ENCODE measurements at regions of chr22 and their contacts with region 1.

Region 1: DNA sequence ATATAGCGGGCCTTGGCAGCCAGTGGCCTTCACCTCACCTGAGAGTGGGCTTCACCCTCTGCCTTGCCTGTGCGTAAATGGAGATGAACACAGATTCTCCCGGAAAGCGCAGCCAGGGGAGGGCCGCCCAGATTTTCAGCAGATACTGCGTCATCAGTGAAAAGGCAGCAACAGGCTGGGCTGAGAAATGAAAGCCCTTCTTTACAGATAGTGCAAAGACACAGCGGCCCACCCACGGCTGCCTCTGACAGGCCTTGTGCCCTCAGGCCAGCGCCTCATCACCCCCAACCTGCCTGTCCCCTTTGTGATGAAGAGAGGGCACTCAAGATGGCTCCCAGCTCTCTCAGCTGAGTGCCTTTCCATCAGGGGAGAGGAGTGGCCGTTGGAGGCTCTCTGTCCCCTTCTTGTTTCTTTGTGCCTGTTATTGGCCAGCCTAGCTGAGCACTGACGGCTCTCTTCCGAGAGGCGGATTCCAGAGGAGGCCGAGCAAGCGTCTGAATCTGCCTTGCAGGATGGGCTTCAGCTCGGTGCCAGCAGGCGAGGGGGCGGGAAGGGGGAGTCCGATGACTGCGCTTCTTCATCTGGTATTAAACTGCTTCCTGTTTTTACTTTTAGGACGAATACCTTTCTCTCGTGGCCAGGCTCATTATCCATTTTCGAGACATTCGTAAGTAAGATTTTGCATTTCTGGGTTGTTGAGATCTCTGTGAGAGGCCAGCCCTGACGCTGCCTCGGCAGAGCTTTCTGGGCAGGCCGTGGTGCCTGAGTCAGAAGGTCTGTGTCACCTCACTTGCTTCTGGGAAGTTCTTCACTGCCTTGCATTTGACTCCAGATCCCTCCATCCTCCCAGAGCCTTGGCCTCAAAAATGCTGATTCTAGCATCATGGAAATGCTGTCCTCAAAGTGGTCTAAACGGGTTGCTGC is 43.7 kb downstream of the MED15 start:
- DNase-seq: peak; percentile 71

Region 2: DNA sequence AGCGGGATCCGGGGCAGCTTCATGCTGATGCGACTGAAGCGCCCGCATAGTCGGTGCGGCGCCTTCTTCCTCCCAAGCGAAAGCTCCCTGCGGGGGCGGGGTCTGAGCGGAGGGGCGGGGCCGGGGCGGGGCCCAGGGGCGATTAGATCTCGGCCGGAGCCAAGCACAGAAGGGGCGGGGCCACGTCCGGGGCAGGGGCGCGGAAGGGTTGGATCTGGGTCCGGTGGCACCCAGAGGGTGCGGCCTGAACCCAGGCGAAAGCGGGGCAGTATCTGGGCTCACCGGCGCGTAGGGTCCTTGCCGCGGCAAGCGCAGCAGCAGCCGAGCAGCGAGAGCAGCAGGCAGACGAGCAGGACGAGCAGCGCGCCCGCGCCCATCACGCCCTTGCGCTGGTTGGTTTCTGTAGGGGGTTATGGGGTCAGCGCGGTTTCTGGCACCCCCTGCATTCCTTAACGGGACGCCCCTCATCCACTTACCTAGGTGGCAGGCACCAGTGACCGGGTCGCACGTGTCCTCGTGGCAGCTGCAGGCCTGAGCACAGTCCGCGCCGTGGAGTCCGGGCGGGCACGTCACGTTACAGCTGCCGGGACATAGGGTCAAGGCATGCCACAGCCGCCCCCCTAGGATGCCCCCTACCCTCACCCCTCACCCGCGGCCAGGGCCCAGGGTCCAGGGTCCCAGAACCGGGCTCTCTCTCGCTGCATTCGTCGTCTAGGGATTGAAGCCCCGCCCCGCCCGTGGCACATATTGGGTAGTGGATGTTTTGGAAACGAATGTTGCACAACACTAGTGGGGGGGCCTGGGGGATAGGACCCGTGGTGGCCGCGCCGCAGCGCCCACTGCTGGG is 121.6 kb before region 1 on chr22:
- intact Hi-C with region 1: loop called (anchors 10 kb)
- DNase-seq: peak; percentile 88

Region 3: GRCh38 chr22:20495861-20496681 is 55.0 kb before region 1 on chr22:
- intact Hi-C with region 1: no loop called
- DNase-seq: peak; percentile 97

Region 4: DNA sequence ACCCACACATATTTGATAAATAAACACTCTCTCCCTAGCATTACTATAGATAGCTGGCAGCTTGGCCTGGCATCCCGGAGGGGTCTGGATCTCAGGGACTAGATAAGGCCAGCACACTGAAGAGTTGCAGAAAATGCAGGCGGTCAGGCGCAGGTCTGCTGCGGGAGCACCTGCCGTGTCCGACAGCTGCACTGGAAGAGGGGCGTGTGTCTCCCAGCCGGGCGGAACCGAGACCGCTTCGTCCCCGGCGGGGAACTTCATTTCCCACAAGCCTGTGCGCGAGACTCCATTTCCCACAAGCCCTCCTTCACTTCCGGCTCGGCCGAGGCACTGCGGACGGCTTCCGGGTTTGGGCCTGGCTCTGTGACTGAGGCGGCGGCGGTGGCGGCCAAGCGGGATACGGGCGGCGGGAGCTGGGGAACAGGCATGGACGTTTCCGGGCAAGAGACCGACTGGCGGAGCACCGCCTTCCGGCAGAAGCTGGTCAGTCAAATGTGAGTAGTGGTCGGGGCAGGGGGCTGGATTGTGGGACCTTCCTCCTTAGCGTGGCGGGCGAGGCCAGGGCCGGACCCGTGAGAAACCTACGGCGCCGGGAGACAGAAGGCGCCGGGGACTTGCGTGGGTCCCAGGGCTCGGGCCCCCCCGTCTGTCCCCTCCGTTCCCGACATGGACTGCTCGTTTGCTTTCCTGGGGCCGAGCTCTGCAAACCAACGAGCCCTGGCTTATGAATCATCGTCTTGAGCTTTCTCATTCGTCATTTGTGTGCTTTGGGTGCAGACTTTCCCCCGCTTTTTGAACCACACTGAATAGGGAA is 43.6 kb before region 1 on chr22 and contains the start of gene MED15:
- intact Hi-C with region 1: loop called (anchors 5 kb)
- DNase-seq: peak; percentile 97
- total RNA-seq, gene MED15: 43.9 TPM

Region 5: DNA sequence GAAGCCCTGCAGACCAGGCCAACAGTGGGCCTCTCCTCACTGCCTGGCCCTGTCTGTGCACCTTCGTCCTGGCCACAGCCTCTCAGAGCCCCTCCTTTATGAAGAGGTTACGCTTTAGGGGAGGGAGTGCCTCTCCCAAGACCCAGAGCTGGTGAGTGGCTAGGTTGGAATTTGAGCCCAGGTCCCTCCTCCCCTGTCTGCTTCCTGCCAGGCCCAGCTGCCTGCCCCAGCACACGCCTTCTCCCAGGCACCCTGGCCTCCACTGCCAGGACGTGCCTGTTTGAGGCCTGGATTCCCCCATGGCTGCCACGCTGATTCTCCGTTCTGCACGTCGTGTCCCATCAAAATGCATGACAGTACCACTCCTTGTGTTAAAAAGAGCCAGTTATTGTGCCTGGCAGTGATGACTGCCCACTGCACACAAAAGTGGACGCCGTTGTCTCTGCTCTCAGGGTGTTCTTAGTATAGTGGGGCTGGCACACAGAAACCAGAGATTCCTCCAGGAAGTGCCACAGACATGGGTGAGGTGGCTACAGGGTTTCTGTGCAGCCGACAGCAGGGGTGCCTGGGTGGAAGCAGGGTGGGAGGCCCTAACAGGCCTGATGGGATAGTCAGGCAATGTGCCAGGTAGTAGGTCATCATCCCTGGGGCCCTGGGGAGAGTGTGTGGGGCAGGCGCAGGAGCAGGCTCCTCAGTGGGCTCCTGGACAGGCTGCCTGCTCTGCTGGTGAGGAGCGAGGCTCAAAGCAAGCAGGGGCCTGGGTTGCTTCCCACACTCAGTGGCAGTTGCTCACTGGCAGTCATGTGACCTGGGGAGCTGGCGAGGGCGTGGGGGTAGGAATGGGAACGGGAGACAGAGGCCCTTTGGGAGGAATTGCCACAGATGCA is 19.5 kb before region 1 on chr22:
- intact Hi-C with region 1: no loop called
- DNase-seq: no peak

Measured in cardiac septum (tissue), 1 donor.